Activated CD4-positive, alpha-beta T cell treated with anti-CD3 and anti-CD28 coated beads, Interleukin-2, amount 10 ng/mL, durations not matched to agents 7 days and 5 days (primary cell): ENCODE measurements at regions of chr7 and their contacts with region 1.

Region 1: DNA sequence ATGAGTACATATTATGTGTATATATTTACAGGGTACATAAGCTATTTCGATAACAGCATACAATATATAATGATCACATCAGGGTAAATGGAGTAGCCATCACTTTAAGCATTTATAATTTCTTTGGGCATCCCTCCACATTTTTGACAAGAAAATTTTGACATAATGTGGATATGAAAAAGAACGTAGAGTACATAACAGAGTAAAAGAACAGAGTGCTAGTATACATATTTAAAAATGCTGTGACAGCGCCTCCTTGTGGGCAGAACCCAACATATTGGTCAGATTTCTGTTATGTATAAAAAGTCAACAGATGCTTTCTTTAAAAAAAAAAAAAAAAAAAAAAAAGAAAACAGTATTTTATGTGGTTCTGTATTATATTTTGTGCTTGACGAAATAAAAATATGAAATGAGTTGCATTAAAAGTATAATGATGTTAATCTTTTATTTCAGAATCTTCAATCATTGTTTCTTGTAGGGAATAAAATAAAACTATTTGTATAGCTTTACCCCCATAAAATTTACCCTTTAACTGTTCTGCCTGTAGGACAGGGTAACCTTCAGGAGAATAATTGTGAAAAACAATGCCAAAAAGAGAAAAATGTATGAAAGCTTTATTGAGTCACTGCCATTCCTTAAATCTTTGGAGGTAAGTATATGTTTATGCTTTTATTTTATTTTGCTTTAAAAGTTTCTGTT is 18.3 kb upstream of the HBP1 start:
- DNase-seq: peak; percentile 84
- H3K4me3 Mint-ChIP-seq: no peak overlapping the region
- H3K27ac Mint-ChIP-seq: no peak overlapping the region
- H3K4me1 Mint-ChIP-seq: peaks cover 5% of the 10 kb centered on the region
- H3K27me3 Mint-ChIP-seq: no peaks in the 10 kb centered on the region

Region 2: DNA sequence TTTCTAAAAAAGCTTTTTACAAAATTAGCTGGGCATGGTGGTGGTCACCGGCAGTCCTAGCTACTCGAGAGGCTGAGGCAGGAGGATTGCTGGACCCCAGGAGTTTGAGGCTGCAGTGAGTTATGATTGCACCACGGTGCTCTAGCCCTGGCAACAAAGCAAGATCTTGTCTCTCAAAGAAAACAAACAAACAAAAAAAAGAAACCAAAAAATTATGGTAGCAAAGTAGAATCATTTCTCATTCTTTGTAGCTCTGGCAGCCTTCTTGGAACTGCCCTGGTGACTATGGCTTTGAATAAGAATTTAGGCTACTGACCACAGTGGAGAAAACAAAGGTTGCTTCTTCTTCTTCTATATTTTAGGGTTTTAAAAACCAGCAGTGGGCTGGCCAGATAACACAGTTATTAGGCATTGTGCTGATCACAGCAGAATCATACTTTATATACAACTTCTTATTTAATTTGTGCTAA is 148.0 kb before region 1 on chr7:
- CTCF ChIA-PET with region 1: no interaction called
- POLR2A ChIA-PET with region 1: interaction called, 10 read pairs
- DNase-seq: no peak
- H3K4me3 Mint-ChIP-seq: no peak overlapping the region
- H3K27ac Mint-ChIP-seq: no peak overlapping the region
- H3K4me1 Mint-ChIP-seq: no peaks in the 10 kb centered on the region
- H3K27me3 Mint-ChIP-seq: peaks cover 4% of the 10 kb centered on the region